Activated CD4-positive, alpha-beta T cell treated with anti-CD3 and anti-CD28 coated beads for 36 hours (primary cell): ENCODE measurements at regions of chr5 and their contacts with region 1.

Region 1: GRCh38 chr5:134140530-134141201 is 26.2 kb downstream of the TCF7 start:
- DNase-seq: peak; percentile 82
- ATAC-seq: peak; percentile 42
- H3K4me3 Mint-ChIP-seq: no peak overlapping the region
- H3K27ac Mint-ChIP-seq: no peak overlapping the region
- H3K4me1 Mint-ChIP-seq: peaks cover 69% of the 10 kb centered on the region
- H3K27me3 Mint-ChIP-seq: no peaks in the 10 kb centered on the region

Region 2: DNA sequence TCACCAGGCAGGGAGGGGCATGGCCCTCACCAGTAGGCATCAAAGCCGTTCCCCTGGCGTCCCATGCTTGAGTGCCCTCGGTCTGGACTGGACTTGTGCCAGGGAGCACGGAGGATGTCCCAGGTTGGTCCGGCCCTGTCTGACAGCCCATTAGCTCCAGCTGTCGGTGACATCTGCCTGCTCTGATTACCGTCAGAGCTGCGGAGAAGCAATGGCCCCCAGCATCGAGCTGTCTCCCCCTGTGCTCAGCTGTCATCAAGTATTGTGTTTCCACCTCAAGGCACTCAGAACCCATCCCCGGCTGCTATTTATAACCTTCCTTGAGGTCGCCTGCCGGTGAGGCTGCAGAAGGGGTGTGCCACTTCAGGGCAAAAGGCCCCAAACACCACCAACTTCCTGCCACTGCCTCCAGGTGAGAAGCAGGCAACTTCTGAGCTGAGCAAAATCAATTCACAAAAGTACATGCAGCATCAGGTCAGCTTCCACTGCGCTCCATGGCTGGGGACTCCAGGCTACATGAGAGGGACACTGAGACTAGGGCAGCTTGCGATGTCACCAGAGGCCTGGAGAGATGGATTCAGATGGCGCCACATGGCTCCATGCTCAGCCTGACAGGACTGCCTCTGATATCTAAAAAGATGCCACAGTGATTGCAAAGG is 314.9 kb before region 1 on chr5:
- CTCF ChIA-PET with region 1: no interaction called
- POLR2A ChIA-PET with region 1: no interaction called
- intact Hi-C with region 1: no loop called
- DNase-seq: peak; percentile 37
- ATAC-seq: peak; percentile 69
- H3K4me3 Mint-ChIP-seq: no peak overlapping the region
- H3K27ac Mint-ChIP-seq: peak overlapping the region; percentile 10
- H3K4me1 Mint-ChIP-seq: peaks cover 24% of the 10 kb centered on the region
- H3K27me3 Mint-ChIP-seq: peaks cover 4% of the 10 kb centered on the region

Region 3: GRCh38 chr5:133848341-133848811 is 292.3 kb before region 1 on chr5:
- CTCF ChIA-PET with region 1: no interaction called
- POLR2A ChIA-PET with region 1: no interaction called
- intact Hi-C with region 1: no loop called
- DNase-seq: no peak
- ATAC-seq: no peak
- H3K4me3 Mint-ChIP-seq: no peak overlapping the region
- H3K27ac Mint-ChIP-seq: no peak overlapping the region
- H3K4me1 Mint-ChIP-seq: peaks cover 5% of the 10 kb centered on the region
- H3K27me3 Mint-ChIP-seq: peaks cover 6% of the 10 kb centered on the region

Region 4: GRCh38 chr5:134053840-134054338 is 86.8 kb before region 1 on chr5:
- CTCF ChIA-PET with region 1: interaction called, 14 read pairs
- POLR2A ChIA-PET with region 1: interaction called, 4 read pairs
- intact Hi-C with region 1: no loop called
- DNase-seq: peak; percentile 23
- ATAC-seq: peak; percentile 70
- H3K4me3 Mint-ChIP-seq: no peak overlapping the region
- H3K27ac Mint-ChIP-seq: peak overlapping the region; percentile 52
- H3K4me1 Mint-ChIP-seq: peaks cover 50% of the 10 kb centered on the region
- H3K27me3 Mint-ChIP-seq: no peaks in the 10 kb centered on the region

Region 5: DNA sequence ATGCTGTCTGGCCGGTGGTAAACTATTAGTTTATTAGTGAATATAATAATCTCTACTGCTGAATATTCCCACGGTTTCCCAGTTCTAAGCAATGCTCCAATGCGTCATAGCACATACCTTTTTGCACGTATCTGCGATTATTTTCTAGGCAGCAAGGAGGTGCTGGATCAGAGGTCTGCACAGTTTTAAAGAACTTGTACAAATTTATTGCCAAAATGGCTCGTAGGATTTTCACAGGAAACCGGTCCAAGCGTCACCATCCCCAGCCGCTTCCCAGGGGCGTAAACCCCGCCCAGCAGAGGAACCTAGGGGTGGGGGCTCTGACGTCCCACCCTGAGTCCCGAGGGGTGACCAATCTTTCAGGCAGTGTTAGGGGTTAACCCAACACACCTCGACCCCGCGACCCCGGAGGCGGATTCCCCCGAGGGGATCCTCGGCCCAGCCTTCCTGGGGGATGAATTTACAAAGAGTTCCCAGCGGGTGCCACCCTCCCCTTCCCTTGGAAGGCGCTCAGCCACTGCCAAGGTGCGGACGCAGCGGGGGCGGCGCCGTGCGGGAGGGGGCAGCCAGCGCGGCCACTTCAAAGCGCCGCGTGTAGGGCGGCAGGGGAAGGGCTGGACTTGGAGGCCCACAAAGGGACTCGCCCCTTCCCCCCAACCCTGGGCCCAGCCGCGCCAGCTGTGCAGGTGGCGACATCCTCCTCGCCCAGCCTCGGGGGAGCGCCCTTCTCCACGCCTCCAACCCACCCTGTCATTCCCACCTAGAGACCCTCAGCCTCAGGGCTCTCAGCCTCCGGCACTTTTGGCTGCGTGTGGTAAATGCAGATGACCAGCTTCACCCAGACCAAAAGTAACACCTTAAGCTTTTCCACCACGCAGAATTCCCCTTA is 69.7 kb before region 1 on chr5:
- CTCF ChIA-PET with region 1: interaction called, 33 read pairs
- POLR2A ChIA-PET with region 1: interaction called, 5 read pairs
- intact Hi-C with region 1: loop called (anchors 1 kb)
- DNase-seq: peak; percentile 77
- ATAC-seq: peak; percentile 1
- H3K4me3 Mint-ChIP-seq: peak overlapping the region; percentile 73
- H3K27ac Mint-ChIP-seq: peak overlapping the region; percentile 89
- H3K4me1 Mint-ChIP-seq: peaks cover 68% of the 10 kb centered on the region
- H3K27me3 Mint-ChIP-seq: no peaks in the 10 kb centered on the region

Region 6: DNA sequence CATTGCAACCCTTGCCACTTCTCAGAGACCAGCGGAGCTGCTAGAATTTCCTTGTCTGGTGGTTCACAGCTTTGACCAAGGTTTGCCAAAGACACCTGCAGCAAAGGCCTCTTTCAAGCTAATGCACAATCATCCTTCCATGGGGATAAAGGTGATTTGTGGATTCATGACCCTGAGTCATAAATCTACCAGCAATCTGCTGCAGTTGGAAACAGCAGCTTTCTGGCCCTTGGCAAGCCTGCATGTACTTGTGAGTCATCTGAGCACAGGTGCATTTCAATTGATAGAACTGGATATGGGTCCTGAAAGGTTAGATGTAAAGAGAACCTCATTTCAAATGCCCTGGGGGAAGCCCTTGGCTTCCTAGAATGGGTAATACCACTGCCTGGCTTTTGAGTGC is 47.8 kb before region 1 on chr5:
- CTCF ChIA-PET with region 1: interaction called, 15 read pairs
- POLR2A ChIA-PET with region 1: no interaction called
- intact Hi-C with region 1: loop called in 1 of 2 experiments (anchors 5 kb)
- DNase-seq: no peak
- ATAC-seq: peak; percentile 63
- H3K4me3 Mint-ChIP-seq: no peak overlapping the region
- H3K27ac Mint-ChIP-seq: no peak overlapping the region
- H3K4me1 Mint-ChIP-seq: peaks cover 82% of the 10 kb centered on the region
- H3K27me3 Mint-ChIP-seq: peaks cover 2% of the 10 kb centered on the region